Mucosa of descending colon (tissue), 3 donors: ENCODE measurements at regions of chr20 and their contacts with region 1.

Region 1: DNA sequence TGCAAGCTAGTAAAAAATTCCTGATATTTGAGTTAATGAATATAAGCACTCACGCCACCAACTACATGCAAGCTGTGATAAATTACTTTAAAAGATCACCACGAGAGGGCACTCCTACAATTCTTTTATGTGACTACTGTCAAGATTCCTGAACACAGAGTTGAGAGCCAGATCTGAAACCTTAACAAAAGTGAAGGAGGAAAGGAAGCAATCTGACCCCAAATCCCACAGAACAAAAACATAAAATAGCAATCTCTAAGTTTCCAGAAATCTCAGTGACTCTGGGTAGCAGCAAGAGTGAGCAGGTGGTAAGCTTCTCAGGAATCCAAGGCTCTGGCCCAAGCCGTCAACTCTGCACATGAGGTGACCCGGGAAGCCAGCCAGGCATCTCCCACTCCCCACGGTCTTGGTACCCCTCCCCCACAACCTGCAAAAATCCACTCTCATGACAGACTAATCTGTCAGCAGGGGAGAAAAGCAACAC is 55.1 kb downstream of the STAU1 start:
- DNase-seq: peak in 1 of 3 donors; percentile 66
- ATAC-seq: peak; percentile 80
- H3K4me3 ChIP-seq: no peak overlapping the region
- H3K4me1 ChIP-seq: no peaks in the 10 kb centered on the region
- CTCF ChIP-seq: no peak

Region 2: GRCh38 chr20:48776306-48776705 is 356.7 kb before region 1 on chr20:
- intact Hi-C with region 1: no loop called
- DNase-seq: no peak
- ATAC-seq: peak; percentile 15
- H3K4me3 ChIP-seq: no peak overlapping the region
- H3K4me1 ChIP-seq: no peaks in the 10 kb centered on the region
- CTCF ChIP-seq: no peak

Region 3: DNA sequence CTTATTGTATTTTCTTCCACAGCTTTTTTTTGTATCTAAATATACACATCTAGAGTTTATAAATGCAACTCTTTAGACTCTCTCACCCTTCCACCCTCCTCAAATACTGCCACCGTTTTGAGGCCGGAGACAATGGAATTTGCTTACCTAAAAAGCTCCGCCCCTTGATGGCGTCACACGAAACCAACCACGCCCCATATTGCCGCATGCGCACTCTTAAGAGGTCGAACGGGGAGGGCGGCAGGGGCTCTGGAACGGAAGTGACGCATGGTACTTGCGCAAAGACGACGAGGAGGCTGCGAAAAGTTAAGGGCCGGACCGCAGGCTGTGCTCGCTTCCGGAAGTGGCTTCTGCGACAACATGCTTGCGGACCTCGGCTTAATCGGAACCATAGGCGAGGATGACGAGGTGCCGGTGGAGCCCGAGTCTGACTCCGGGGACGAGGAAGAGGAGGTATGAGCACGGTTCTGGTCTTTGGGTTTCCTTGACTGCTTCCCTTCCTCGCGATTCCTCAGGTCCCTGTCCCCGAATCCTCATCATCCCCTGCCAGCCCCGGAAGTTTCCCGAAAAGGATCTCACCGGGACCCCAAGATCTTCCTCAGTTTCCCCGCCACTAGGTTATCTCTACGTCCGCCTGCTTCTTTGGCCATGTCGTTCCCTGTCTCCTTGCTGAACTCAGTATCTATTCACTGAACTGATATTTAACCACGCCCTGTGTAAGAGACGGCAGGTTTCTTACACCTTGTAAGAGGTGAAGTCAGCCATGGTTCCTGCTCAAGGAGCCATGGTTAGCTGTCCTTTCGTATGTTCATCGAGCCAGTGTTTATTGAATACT is 86.3 kb after region 1 on chr20 and contains the start of gene DDX27:
- intact Hi-C with region 1: loop called (anchors 2 to 5 kb)
- DNase-seq: peak; percentile 98
- ATAC-seq: peak; percentile 98
- H3K4me3 ChIP-seq: peak within 1 kb of the TSS; percentile 74
- H3K4me1 ChIP-seq: peaks cover 9% of the 10 kb centered on the region
- CTCF ChIP-seq: no peak
- total RNA-seq, gene DDX27: 27.1 to 32.8 (median 32.5) TPM